PC-3 (cell line): ENCODE measurements at regions of chr1 and their contacts with region 1.

Region 1: DNA sequence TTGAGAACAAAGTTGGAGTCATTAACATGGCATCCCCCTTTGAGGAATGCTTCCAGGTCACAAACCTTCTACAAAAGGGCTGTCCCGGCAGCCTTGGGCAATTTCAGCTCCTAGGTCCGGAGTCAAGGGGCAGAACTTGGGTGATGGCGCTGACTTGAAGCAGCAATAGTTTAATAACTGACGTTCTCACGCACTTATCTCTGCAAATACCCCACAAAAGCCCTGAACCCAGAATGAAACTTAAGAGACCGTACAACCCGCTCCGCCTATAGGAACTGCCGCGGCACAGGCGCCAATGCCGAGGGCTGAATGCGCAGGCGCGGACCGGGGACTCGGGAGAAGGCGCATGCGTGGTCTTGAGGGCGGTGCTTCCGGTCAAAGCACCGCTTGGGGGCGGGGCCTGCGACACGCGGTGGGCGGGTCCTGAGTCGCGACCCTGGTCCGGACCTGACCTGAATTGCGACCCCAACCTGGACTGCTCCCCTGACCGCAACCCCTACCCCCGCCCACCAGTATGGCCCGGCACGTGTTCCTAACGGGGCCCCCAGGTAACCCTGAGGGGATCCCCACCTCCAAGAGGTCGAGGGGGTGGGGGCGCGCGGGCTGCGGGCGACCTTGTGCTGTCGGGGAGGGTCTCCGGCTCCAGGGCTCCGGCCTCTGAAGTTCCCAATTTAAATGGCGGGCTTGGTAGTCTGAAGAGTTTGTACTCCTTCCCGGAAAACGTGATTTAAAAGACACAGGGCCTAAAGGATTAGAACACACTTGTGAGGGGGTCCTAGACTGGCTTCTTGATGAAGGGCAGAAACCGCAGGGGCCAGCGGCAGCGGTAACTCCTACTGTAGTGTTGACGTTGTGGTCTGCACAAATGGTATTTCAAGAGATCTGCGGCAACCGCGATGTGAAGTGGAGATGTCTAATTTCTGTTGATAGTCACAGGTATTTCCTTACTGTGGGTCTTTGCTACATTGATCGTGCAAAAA is at the start of gene NTPCR:
- DNase-seq: peak; percentile 98
- ATAC-seq: peak; percentile 77
- H3K4me3 ChIP-seq: peak within 1 kb of the TSS; percentile 81
- H3K27ac ChIP-seq: peak within 1 kb of the TSS; percentile 57
- H3K4me1 ChIP-seq: peaks cover 24% of the 10 kb centered on the region
- H3K27me3 ChIP-seq: no peaks in the 10 kb centered on the region
- CTCF ChIP-seq: 0 out of 2 replicates have a peak, but pooled peaks have one; percentile 6
- total RNA-seq, gene NTPCR: 17.5 and 43.1 TPM in 2 replicates

Region 2: GRCh38 chr1:232149287-232150201 is 800.9 kb before region 1 on chr1:
- CTCF ChIA-PET with region 1: no interaction called
- POLR2A ChIA-PET with region 1: no interaction called
- intact Hi-C with region 1: no loop called
- DNase-seq: peak; percentile 90
- ATAC-seq: peak; percentile 80
- H3K4me3 ChIP-seq: peak overlapping the region; percentile 31
- H3K27ac ChIP-seq: peak overlapping the region; percentile 95
- H3K4me1 ChIP-seq: peaks cover 28% of the 10 kb centered on the region
- H3K27me3 ChIP-seq: no peaks in the 10 kb centered on the region
- CTCF ChIP-seq: no peak

Region 3: GRCh38 chr1:232622997-232623380 is 327.5 kb before region 1 on chr1:
- CTCF ChIA-PET with region 1: no interaction called
- POLR2A ChIA-PET with region 1: no interaction called
- intact Hi-C with region 1: no loop called
- DNase-seq: no peak
- ATAC-seq: peak; percentile 20; the same call in 1 of the 2 replicates
- H3K4me3 ChIP-seq: no peak overlapping the region
- H3K27ac ChIP-seq: peak overlapping the region; percentile 81
- H3K4me1 ChIP-seq: peaks cover 48% of the 10 kb centered on the region
- H3K27me3 ChIP-seq: no peaks in the 10 kb centered on the region
- CTCF ChIP-seq: no peak

Region 4: GRCh38 chr1:232635778-232636356 is 314.6 kb before region 1 on chr1:
- CTCF ChIA-PET with region 1: no interaction called
- POLR2A ChIA-PET with region 1: no interaction called
- intact Hi-C with region 1: loop called (anchors 1 kb)
- DNase-seq: peak; percentile 85
- ATAC-seq: peak; percentile 89
- H3K4me3 ChIP-seq: no peak overlapping the region
- H3K27ac ChIP-seq: no peak overlapping the region
- H3K4me1 ChIP-seq: peaks cover 5% of the 10 kb centered on the region; the same call in 1 of the 2 replicates
- H3K27me3 ChIP-seq: no peaks in the 10 kb centered on the region
- CTCF ChIP-seq: peak; percentile 94

Region 5: GRCh38 chr1:232767305-232768074 is 183.0 kb before region 1 on chr1:
- CTCF ChIA-PET with region 1: no interaction called
- POLR2A ChIA-PET with region 1: no interaction called
- intact Hi-C with region 1: loop called (anchors 2 kb)
- DNase-seq: peak; percentile 94
- ATAC-seq: peak; percentile 83
- H3K4me3 ChIP-seq: no peak overlapping the region
- H3K27ac ChIP-seq: peak overlapping the region; percentile 22
- H3K4me1 ChIP-seq: peaks cover 15% of the 10 kb centered on the region
- H3K27me3 ChIP-seq: no peaks in the 10 kb centered on the region
- CTCF ChIP-seq: no peak

Region 6: DNA sequence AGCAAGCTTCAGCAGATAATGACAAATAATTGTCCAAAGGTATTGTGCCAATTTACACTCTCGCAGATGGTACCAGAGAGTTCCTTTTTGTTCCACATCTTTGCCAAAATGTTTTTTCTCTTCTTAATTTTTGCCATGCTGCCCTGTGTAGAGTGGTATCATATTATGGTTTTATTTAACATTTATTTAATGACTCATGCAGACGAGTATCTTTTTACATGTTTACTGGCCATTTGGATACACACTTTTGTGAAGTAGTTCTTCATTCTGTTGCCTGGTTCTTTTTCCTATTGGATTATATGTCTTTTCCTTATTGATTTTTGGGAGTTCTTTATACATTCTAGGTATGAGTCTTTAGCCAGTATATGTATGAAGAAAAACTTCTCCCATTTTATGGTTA is 193.9 kb after region 1 on chr1:
- CTCF ChIA-PET with region 1: no interaction called
- POLR2A ChIA-PET with region 1: no interaction called
- intact Hi-C with region 1: loop called (anchors 1 kb)
- DNase-seq: peak; percentile 74
- ATAC-seq: peak; percentile 99
- H3K4me3 ChIP-seq: no peak overlapping the region
- H3K27ac ChIP-seq: peak overlapping the region; percentile 39
- H3K4me1 ChIP-seq: peaks cover 14% of the 10 kb centered on the region
- H3K27me3 ChIP-seq: no peaks in the 10 kb centered on the region
- CTCF ChIP-seq: no peak

Region 7: DNA sequence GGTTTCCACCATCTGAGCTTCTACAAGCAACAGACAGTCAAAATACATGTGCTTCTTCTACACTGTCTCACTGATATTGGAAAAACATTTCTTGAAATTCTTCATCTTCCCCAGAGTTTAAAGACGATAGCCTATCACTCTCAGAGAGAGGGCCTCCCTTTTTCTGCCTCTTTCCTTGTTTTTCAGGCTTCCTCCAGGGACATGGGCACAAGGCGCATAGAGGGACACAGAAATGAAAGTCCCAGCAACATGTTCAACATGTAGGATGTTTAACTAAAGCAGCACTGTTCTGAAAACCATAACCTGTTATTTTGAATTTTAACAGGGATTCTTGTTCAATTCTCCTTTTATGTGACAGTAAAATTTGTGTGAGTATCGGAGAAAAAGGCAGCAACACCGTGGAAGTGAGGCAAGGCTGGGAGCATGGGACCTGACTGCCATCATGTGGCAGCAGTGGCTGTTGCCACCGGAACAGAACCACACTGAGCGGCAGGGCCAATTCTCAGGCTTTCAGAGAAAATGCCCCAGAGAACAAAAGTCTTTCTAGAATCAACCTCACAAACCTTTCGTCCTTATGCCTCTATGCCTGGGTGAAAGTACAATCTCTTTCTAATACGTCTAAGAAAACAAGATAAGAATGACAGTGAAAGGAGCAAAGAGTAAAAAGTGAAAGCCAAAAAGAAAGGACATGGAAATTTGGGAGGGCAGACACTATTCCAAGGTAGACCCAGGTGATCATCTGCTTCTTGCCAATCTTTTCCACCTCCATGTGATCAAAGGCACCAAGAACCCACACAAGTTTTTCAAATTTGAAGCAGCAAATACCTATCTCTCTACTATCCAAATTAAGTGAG is 290.6 kb after region 1 on chr1:
- CTCF ChIA-PET with region 1: no interaction called
- POLR2A ChIA-PET with region 1: no interaction called
- intact Hi-C with region 1: loop called (anchors 10 kb)
- DNase-seq: peak; percentile 39
- ATAC-seq: peak; percentile 70
- H3K4me3 ChIP-seq: no peak overlapping the region
- H3K27ac ChIP-seq: no peak overlapping the region
- H3K4me1 ChIP-seq: no peaks in the 10 kb centered on the region
- H3K27me3 ChIP-seq: no peaks in the 10 kb centered on the region
- CTCF ChIP-seq: peak; percentile 80